Psoas muscle (tissue), 8 donors: ENCODE measurements at regions of chr16 and their contacts with region 1.

Region 1: DNA sequence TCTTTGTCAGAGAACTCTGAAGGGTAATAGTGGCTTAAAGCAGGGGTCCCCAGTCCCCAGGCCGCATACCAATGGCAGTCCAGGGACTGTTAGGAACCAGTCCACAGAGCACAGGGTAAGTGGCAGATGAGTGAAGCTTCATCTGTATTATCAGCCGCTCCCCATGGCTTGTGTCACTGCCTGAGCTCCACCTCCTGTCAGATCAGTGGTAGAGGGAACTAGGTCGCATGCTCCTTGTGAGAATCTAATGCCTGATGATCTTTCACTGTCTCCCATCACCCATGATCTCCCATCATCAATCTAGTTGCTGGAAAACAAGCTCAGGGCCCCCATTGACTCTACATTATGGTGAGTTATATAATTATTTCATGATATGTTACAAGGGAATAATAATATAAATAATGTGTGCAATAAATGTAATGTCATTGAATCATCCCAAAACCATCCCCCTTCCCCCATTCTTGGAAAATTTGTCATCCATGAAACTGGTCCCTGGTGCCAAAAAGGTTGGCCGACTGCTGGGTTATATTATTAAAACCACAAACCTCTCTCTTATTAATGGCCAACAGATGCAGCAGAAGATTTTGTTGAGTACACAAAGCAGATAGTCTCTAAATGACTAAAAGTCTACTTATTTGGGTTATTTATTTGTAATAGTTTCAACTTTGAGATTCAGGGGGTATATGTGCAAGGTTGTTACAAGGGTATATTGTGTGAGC is 782.7 kb downstream of the CDH11 start:
- DNase-seq: no peak
- ATAC-seq: no peak
- H3K4me3 ChIP-seq: no peak overlapping the region
- H3K27ac ChIP-seq: no peak overlapping the region
- H3K4me1 ChIP-seq: no peaks in the 10 kb centered on the region
- H3K27me3 ChIP-seq: no peaks in the 10 kb centered on the region
- CTCF ChIP-seq: no peak

Region 2: GRCh38 chr16:63856537-63856936 is 482.7 kb before region 1 on chr16:
- intact Hi-C with region 1: loop called in 1 of 2 experiments (anchors 5 kb)
- DNase-seq: no peak
- ATAC-seq: no peak
- H3K4me3 ChIP-seq: no peak overlapping the region
- H3K27ac ChIP-seq: no peak overlapping the region
- H3K4me1 ChIP-seq: no peaks in the 10 kb centered on the region
- H3K27me3 ChIP-seq: no peaks in the 10 kb centered on the region
- CTCF ChIP-seq: no peak